Activated CD4-positive, alpha-beta memory T cell treated with anti-CD3 and anti-CD28 coated beads, Interleukin-2, amount 10 ng/mL, durations not matched to agents 7 days and 5 days (primary cell): ENCODE measurements at regions of chr2 and their contacts with region 1.

Region 1: DNA sequence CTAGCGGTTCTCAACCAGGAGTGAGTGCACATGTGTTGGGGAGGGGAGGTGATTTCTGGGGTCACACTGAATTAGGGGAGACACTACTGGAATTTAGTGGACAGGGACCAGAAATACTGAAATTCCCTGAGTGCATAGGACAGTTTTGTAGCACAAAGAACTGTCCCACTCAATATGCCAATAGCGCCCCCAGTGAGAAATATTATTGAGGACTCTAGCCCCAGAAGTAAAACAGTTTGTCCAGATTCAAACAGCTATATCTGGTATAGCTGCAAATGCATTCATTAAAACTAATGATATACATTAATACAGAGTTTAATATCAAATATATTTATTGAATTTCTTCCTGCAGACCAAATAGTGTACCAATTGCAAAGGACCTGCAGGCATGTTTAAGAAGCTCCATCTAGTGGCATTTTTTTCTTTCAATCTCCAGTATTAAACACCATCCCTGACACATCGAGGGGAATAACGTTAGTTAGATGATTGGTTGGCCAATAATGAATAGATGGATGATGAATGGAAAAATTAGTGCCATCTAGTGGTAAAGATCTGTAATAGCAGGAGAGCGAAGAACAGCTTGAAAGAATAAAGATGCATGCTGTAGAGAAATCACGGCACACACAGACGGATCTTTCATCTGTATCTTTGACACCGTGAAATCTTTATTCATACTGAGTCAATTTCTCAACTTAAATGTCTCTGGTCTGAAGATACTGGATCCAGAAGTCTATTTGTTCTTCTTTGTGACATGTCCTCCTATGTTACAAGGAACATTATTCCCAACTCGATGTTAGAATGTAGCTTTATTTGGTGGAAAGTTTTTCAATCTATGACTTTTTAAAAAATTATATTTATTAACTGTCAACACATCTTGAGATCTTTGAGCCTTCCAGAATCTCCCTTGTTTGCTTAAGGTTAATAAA is 62.5 kb downstream of the DHRS9 start:
- DNase-seq: no peak
- H3K4me3 Mint-ChIP-seq: no peak overlapping the region
- H3K27ac Mint-ChIP-seq: no peak overlapping the region
- H3K4me1 Mint-ChIP-seq: no peaks in the 10 kb centered on the region
- H3K27me3 Mint-ChIP-seq: no peaks in the 10 kb centered on the region

Region 2: DNA sequence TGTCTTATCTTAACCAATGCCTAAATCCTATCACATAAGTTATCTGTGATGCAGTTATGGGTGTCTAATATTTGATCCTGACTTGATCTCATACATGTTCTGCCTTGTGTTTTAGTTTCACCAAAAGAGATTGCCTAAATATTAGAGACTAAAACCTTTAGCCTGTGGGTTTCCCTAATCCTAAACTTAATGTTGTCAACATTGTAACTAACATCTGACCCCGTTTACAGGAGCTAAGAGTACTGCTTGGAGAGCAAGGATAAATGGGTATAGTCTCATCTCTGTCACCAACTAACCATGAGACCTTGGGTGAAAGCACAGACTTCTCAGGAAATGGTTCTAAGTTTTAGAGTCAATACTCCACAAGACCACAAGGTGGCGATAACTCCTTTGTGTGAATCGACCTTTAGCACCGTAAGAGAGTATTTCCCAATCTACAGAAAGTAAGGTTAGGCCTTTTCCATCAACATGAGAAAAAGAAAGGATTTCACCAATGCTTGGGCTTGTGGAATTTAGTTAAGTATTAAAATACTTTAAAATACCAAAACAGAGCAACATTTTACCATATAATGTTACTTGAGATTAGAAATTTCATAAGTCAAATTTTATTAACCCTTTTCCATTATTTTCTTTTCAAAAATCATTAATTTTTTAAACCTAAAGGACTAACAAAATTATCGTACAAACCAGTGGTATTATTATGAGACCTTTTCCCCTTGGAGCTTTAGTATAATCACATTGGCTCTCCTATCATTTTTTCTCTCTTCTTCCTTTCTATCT is 170.2 kb before region 1 on chr2:
- CTCF ChIA-PET with region 1: interaction called, 25 read pairs
- POLR2A ChIA-PET with region 1: no interaction called
- DNase-seq: no peak
- H3K4me3 Mint-ChIP-seq: no peak overlapping the region
- H3K27ac Mint-ChIP-seq: no peak overlapping the region
- H3K4me1 Mint-ChIP-seq: peaks cover 18% of the 10 kb centered on the region
- H3K27me3 Mint-ChIP-seq: peaks cover 5% of the 10 kb centered on the region

Region 3: DNA sequence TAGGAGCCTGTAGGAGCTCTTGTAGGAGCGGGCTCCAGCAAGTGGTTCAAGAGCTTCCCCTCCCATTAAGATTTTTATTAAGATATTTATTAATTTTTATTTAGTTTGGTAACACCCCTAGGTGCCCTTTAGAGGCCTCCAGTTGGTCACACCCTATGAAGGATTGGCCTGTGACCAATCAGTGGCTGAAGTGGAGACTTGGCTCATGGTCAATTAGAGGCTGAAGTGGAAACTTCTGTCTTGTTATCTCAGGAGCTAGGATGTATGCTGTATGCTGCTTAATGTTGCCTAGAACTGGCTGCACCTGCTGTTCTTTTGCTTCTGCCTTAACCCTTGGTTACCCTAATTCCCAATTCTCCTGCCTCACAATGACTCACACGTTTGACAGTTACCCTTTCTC is 13.8 kb before region 1 on chr2:
- CTCF ChIA-PET with region 1: interaction called, 129 read pairs
- POLR2A ChIA-PET with region 1: no interaction called
- DNase-seq: no peak
- H3K4me3 Mint-ChIP-seq: no peak overlapping the region
- H3K27ac Mint-ChIP-seq: no peak overlapping the region
- H3K4me1 Mint-ChIP-seq: no peaks in the 10 kb centered on the region
- H3K27me3 Mint-ChIP-seq: peaks cover 13% of the 10 kb centered on the region